ENCODE measurements at regions of chr13 and their contacts with region 1.

Region 1: DNA sequence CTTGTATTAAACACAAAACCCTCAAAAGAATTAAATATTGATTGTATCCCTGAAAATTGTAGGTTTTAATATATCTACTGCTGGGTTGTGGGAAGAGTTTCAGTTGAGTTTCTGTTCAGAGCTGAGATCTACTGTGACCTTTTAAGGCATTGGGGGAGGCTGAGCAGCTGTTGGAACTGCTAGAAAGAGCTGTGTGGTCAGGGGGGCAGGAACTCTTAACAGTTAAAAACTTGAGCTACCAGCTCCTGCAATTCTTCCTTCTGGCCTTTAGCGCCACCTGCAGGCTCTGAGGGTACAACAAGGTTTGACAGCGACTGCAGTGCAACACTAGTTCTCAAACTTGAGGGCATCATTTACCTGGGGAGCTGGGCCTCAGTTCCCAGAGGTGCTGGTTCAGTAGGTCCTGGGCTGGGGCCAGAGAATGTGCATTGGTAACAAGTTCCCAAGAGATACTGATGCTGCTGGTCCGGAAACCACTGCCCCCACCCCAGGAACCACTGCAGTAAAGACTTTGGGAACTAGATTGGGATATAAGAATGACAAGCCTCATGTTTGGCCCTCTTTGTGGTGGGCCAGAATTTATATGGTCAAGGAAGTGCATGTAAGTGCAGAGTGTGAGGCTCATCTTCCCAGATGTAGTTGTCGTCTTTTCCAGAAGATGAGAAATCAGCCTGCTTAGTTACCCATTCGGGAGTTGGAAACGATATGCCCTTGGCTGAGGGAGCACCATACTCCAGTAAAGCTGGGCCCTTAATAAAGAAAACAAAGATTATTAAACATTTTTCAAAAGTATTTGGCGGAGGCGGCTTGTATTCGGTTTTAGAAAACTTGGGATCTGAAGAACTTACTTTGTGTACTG is 2.6 kb downstream of the RNASEH2B start:
- DNase-seq: peak; percentile 85 to 96 (median 92)
- ATAC-seq: peak; percentile 59
- H3K4me3 ChIP-seq: peak overlapping the region; percentile 78 to 89
- H3K4me3 Mint-ChIP-seq: peak overlapping the region; percentile 92
- H3K27ac ChIP-seq: peak overlapping the region in 1 of 2 experiments; percentile 86
- H3K27ac Mint-ChIP-seq: peak overlapping the region; percentile 92
- H3K4me1 ChIP-seq: peaks cover 48% of the 10 kb centered on the region
- H3K4me1 Mint-ChIP-seq: peaks cover 59% of the 10 kb centered on the region
- H3K27me3 ChIP-seq: no peaks in the 10 kb centered on the region
- H3K27me3 Mint-ChIP-seq: no peaks in the 10 kb centered on the region
- CTCF ChIP-seq: peak; percentile 87

Region 2: GRCh38 chr13:49669735-49670309 is 1242.3 kb before region 1 on chr13:
- CTCF ChIA-PET with region 1: no interaction called
- POLR2A ChIA-PET with region 1: no interaction called
- intact Hi-C with region 1: loop called (anchors 1 to 2 kb)
- DNase-seq: peak in 5 of 9 experiments; percentile 15 to 50 (median 28)
- ATAC-seq: peak; percentile 52
- H3K4me3 ChIP-seq: no peak overlapping the region
- H3K4me3 Mint-ChIP-seq: no peak overlapping the region
- H3K27ac ChIP-seq: no peak overlapping the region
- H3K27ac Mint-ChIP-seq: no peak overlapping the region
- H3K4me1 ChIP-seq: no peaks in the 10 kb centered on the region
- H3K4me1 Mint-ChIP-seq: no peaks in the 10 kb centered on the region
- H3K27me3 ChIP-seq: no peaks in the 10 kb centered on the region
- H3K27me3 Mint-ChIP-seq: no peaks in the 10 kb centered on the region
- CTCF ChIP-seq: peak; percentile 46

Region 3: DNA sequence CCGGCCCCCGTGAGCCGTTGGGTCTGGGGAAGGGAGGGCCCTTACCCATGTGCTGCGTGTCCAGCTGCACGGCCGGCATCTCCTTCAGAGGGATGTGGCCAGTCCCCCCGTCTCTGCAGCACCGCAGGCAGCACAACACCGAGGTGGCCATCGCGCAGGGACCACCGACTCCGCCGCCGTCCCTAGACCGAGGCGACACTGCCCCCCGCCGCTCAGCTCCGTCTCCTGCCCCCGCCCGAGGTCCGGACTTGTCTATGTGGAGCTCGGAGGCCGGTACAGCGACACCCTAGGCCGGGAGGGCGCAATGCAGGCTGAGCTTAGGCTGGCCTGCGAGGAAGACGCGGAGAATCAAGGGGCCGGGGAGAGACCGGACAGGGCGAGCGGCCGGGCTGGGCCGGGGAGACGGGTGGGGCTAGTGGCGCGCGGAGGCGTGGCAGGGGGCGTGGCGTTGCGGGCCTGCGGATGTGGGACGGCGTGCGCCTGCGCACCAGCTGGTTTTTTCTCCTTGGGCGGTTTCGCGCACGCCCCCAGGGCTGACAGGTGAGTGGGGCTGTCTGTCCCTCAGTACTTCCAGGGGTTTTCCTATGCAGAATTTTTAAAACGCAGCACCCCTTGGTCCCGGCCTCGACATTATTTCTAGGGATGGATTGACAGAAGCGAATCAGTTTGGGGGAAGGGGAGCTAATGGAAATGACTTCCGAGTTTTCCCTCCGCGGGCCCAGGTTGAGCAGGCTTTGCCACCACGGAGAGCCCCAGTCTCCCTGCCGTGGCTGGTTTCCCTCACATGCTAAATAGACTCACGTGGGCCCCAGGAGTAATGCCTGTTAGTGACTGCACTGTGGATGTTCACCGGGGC is 975.9 kb before region 1 on chr13 and contains the start of gene SPRYD7:
- CTCF ChIA-PET with region 1: interaction called, 3 read pairs
- POLR2A ChIA-PET with region 1: no interaction called
- intact Hi-C with region 1: loop called (anchors 1 to 5 kb)
- DNase-seq: peak; percentile 82 to 97 (median 94)
- ATAC-seq: peak; percentile 85
- H3K4me3 ChIP-seq: peak within 1 kb of the TSS; percentile 81 to 98
- H3K4me3 Mint-ChIP-seq: peak within 1 kb of the TSS; percentile 88
- H3K27ac ChIP-seq: peak within 1 kb of the TSS; percentile 37 to 44
- H3K27ac Mint-ChIP-seq: peak within 1 kb of the TSS; percentile 81
- H3K4me1 ChIP-seq: peaks cover 14% of the 10 kb centered on the region
- H3K4me1 Mint-ChIP-seq: peaks cover 19% of the 10 kb centered on the region
- H3K27me3 ChIP-seq: no peaks in the 10 kb centered on the region
- H3K27me3 Mint-ChIP-seq: no peaks in the 10 kb centered on the region
- CTCF ChIP-seq: peak; percentile 62
- total RNA-seq, gene SPRYD7: 1.2 to 1.4 TPM

Region 4: DNA sequence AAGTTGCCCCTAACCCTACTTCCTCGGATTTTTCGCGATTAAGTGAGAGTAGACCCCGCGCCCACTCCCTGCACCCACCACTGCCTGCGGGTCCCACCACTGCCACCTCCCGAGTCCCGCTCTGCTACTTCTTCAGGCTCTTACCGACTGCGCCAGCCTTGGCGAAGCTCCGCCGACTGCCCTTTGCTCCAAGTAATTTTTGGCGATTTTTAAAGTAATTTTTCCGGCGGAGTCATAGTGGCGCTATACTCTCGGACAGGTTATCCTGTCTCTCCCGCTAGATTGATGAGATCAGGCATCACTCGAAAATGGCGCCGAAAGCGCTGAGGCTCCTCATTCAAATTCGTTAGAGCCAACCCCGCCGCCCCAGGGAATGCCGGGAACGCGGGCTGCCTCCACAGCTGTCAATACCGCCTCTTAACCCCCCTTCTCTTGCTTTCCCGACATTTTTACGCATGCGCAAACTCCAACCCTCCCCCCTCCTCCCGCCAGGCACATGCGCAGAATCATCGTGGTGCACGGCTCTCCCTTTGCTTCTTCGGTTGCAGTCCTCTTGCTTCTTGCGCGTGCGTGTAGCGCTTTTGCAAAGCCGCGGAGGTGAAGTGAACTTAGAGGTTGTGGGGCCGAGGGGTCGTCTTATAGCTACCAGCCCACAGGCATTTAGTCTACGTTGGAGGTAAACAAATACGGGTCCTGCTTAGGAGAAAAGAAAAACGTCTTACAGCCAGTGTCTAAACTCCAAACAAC is 830.3 kb before region 1 on chr13:
- CTCF ChIA-PET with region 1: interaction called, 24 read pairs
- POLR2A ChIA-PET with region 1: interaction called, 19 read pairs
- intact Hi-C with region 1: loop called (anchors 1 to 2 kb)
- DNase-seq: peak; percentile 97 to 99 (median 98)
- ATAC-seq: peak; percentile 69
- H3K4me3 ChIP-seq: peak overlapping the region; percentile 79
- H3K4me3 Mint-ChIP-seq: peak overlapping the region; percentile 95
- H3K27ac ChIP-seq: peak overlapping the region; percentile 61 to 85
- H3K27ac Mint-ChIP-seq: peak overlapping the region; percentile 95
- H3K4me1 ChIP-seq: peaks cover 29% of the 10 kb centered on the region
- H3K4me1 Mint-ChIP-seq: peaks cover 43% of the 10 kb centered on the region
- H3K27me3 ChIP-seq: peaks cover under 1 to 29% of the 10 kb centered on the region in 2 experiments
- H3K27me3 Mint-ChIP-seq: peaks cover 15% of the 10 kb centered on the region
- CTCF ChIP-seq: no peak

Region 5: DNA sequence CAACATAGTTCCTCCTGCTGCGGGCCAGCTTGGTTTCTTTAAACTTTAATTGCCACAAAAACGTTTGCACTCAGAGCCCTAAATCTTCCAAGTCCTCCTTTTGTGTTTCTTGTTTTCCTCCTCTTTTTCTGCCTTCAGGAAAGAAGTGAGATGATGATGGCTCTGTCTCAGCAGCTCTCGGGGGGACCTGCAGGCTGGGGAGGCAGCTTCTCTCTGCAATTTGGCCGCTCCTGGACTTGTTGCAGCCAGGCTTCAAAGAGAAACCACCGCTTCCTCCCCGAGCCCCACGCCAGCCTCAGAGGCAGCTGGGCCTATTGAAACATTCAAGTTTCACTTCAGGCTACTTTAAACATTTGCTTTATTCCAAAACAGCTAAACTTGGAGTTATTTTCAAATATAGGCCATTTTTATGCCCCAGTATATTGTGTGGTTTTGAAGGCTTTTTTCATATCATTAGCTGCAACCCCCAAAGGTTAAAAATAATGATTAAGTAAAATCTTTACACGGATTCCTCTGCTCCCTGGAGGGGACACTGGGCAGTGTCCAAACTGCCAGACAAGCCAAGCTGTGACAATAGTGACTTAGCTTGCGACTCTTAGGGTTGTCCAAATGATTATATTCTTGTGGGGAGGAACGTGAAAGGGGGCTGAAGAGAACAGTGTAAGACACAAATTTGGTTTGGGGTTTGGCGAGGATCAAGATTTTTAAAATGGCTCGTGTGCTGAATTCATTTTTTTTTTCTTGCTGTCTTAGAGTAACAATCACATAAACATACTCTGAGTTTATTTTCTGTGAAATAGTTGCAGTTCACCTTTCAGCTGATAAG is 399.5 kb before region 1 on chr13:
- CTCF ChIA-PET with region 1: no interaction called
- POLR2A ChIA-PET with region 1: no interaction called
- intact Hi-C with region 1: loop called in 1 of 2 experiments (anchors 5 kb)
- DNase-seq: peak; percentile 16 to 73 (median 36)
- ATAC-seq: peak; percentile 62
- H3K4me3 ChIP-seq: peak overlapping the region; percentile 40 to 53
- H3K4me3 Mint-ChIP-seq: no peak overlapping the region
- H3K27ac ChIP-seq: peak overlapping the region; percentile 51 to 71
- H3K27ac Mint-ChIP-seq: no peak overlapping the region
- H3K4me1 ChIP-seq: peaks cover 18% of the 10 kb centered on the region
- H3K4me1 Mint-ChIP-seq: no peaks in the 10 kb centered on the region
- H3K27me3 ChIP-seq: no peaks in the 10 kb centered on the region
- H3K27me3 Mint-ChIP-seq: no peaks in the 10 kb centered on the region
- CTCF ChIP-seq: no peak

Region 6: DNA sequence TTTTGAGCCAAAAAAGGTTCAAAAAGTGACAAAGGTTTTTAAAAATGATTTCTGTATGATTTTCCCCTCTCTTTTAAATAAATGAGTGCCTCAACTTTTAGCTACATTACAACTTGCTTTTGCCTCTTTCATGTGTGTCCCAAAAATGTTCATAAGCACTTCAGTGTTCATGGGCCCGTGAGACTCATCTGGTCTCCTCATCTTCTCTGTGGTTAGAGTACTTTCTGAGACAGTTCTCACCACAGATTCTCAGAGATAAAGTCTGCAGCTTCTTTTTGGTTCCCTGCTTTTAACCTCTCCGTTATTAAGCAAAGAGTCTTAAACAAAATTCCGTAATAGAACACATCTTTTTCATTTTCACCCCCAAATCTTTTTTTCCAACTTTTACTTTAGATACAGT is 225.6 kb before region 1 on chr13:
- CTCF ChIA-PET with region 1: no interaction called
- POLR2A ChIA-PET with region 1: no interaction called
- intact Hi-C with region 1: no loop called
- DNase-seq: peak in 2 of 9 experiments; percentile 20 to 34
- ATAC-seq: no peak
- H3K4me3 ChIP-seq: no peak overlapping the region
- H3K4me3 Mint-ChIP-seq: no peak overlapping the region
- H3K27ac ChIP-seq: no peak overlapping the region
- H3K27ac Mint-ChIP-seq: no peak overlapping the region
- H3K4me1 ChIP-seq: no peaks in the 10 kb centered on the region
- H3K4me1 Mint-ChIP-seq: peaks cover 9% of the 10 kb centered on the region
- H3K27me3 ChIP-seq: no peaks in the 10 kb centered on the region
- H3K27me3 Mint-ChIP-seq: peaks cover 4% of the 10 kb centered on the region
- CTCF ChIP-seq: no peak

Region 7: DNA sequence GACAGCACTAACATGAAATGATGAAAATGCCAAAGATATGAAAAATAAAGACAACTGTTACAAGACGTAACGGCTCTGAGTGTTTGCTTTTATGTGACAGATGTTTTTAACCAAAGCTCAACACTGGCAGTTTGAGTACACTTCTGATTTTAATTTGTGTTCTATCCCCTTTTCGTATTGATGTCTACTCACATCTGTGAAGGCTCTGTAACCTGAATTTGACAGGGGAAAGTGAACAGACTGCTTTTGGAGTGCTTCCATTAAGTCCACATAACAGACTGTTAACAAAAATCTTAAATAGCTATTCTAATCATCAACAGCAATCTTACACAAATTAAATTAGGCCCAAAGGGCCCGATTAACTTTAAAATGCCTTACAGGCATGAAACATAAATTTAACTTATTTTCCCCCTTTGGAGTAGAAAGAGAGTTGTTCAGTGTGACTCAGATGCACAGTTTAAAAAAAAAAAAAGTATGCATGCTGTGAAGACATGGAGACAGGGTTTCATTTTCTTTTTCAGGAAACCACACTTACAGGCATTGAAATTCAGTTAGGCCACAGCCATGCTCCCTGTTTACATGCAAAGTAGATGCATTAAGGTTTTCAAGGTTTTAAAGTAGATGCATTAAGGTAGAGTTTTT is 18.8 kb before region 1 on chr13:
- CTCF ChIA-PET with region 1: interaction called, 19 read pairs
- POLR2A ChIA-PET with region 1: interaction called, 26 read pairs
- intact Hi-C with region 1: loop called (anchors 1 to 2 kb)
- DNase-seq: peak in 5 of 9 experiments; percentile 16 to 80 (median 53)
- ATAC-seq: peak; percentile 95
- H3K4me3 ChIP-seq: peak overlapping the region; percentile 26 to 30
- H3K4me3 Mint-ChIP-seq: peak overlapping the region; percentile 80
- H3K27ac ChIP-seq: peak overlapping the region; percentile 46 to 86
- H3K27ac Mint-ChIP-seq: peak overlapping the region; percentile 91
- H3K4me1 ChIP-seq: peaks cover 27% of the 10 kb centered on the region
- H3K4me1 Mint-ChIP-seq: peaks cover 42% of the 10 kb centered on the region
- H3K27me3 ChIP-seq: no peaks in the 10 kb centered on the region
- H3K27me3 Mint-ChIP-seq: no peaks in the 10 kb centered on the region
- CTCF ChIP-seq: no peak

Region 8: DNA sequence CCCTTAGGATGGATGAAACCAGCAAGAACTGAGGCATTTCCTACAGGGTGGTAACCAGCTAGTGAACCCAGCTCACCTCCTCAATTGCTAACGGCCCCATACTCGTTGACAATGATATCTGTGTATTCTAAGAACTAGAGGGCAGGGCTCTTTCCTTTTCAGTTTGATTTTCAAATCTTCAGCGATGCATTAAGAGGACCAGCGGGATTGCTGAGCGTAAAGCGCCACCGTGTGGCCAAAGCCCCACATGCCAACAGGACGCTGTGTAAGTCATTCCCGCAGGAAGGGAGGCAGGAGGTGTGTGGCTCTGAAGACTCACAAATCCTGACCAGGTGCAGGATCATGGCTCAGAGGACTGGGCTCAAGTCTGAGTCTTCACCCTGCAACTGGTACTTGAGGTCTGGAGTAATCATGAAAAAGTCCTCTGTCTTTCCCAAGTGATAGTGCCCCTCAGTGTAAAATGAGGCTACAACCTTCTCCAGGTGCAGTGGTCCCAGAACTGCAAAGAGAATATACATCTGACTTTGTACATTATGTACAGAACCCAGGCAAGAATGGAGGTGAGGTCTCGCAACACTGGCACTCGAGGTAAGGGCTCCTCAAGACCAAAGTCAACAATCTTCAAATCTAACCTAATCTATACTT is 158.0 kb after region 1 on chr13:
- CTCF ChIA-PET with region 1: interaction called, 6 read pairs
- POLR2A ChIA-PET with region 1: no interaction called
- intact Hi-C with region 1: loop called in 1 of 2 experiments (anchors 5 kb)
- DNase-seq: peak; percentile 42 to 84 (median 76)
- ATAC-seq: peak; percentile 90
- H3K4me3 ChIP-seq: no peak overlapping the region
- H3K4me3 Mint-ChIP-seq: no peak overlapping the region
- H3K27ac ChIP-seq: no peak overlapping the region
- H3K27ac Mint-ChIP-seq: no peak overlapping the region
- H3K4me1 ChIP-seq: peaks cover 6% of the 10 kb centered on the region
- H3K4me1 Mint-ChIP-seq: peaks cover 7% of the 10 kb centered on the region
- H3K27me3 ChIP-seq: no peaks in the 10 kb centered on the region
- H3K27me3 Mint-ChIP-seq: peaks cover 20% of the 10 kb centered on the region
- CTCF ChIP-seq: peak; percentile 94